HCT116 (cell line): ENCODE measurements at regions of chr1 and their contacts with region 1.

Region 1: DNA sequence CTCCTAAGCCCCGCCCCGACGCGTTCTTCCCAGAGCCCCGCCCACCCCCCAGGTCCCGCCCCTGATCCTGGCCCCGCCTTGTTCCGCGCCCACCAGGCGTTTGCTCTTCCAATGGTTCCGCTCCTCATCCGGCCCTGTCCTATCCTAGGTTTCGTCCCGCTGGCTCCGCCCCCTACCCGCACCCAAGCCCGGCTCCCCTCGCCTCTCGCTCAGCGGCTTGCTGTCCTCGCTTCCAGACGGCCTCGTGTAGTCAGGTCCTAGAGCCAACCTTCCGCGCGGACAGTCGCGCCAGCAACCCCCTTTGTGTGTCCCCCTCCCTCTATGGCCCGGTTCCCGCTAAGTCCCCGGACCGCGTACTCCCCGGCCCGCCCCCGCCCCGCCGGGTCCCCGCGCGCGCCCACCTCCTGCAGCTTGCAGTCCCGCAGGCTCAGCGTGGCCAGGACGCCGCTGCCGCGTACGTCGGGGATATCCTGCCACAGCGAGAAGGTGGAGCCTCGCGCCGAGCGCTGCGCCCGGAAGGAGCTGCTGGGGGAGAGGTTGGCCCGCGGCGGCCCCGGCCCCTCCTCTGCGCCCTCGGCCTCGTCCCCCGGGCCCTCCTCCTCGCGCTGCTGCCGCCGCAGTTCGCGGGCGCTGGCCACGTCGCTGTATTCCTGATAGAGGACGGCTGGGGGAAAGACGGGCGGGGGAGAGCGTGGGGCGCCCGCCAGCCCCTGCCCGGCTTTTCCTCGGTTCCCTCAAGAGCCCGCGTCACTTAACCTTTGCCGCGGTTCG is 5.7 kb downstream of the ARHGEF19 start:
- DNase-seq: peak; percentile 98
- ATAC-seq: peak; percentile 84
- H3K4me3 ChIP-seq: peak overlapping the region; percentile 88 to 93
- H3K27ac ChIP-seq: peak overlapping the region; percentile 91
- H3K4me1 ChIP-seq: peaks cover 25 to 53% of the 10 kb centered on the region in 2 experiments
- H3K27me3 ChIP-seq: no peaks in the 10 kb centered on the region
- CTCF ChIP-seq: no peak
- POLR2A ChIP-seq: peak; percentile 63
- RAD21 ChIP-seq: no peak

Region 2: DNA sequence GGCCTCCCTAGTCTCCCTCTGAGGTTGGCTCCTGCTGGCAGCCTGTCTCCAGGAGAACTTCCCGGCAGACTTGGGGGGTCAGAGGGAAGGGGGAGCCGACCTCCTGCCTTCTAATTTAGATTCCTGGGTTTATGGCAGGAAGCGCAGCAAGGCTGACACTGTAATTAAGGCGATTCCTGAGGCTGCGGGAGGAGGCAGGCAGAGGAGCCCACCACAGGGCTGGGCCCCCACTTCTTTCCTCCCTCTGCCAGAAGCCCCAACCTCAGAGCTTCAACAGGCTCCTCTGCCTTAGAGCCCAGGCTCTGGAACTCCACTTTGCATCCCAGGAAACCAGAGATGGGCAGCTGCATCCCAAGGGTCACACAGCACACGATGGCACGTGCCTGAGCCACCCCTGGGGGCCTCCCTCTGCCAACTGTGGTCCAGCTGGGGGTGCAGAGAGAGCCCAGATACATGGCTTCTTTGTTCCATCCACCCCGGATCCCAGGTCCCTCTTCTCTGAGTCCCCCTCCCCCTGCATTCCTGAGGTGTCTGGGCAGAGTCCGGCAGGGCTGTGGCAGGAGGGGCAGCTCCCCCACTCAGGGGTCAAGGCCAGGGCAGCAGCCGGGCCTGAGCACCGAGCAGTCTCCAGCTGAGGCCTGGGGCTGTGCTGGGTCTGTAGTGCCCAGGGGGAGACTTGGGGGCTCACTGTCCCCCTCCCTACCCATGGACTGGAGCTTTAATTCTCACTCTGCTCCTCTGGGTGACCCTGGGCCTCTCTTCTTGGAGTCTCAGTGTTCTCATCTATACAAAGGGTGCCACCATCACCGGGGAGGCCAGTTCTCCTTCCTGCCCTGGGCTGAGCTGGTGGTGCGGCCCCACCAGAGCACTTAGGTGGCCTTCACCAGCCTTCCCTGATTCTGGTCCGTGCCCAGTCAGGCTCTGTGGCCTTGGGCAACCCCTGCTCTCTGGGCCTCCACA is 93.9 kb before region 1 on chr1:
- CTCF ChIA-PET with region 1: no interaction called
- POLR2A ChIA-PET with region 1: no interaction called
- RAD21 ChIA-PET with region 1: no interaction called
- intact Hi-C with region 1: no loop called
- DNase-seq: no peak
- ATAC-seq: no peak
- H3K4me3 ChIP-seq: no peak overlapping the region
- H3K27ac ChIP-seq: no peak overlapping the region
- H3K4me1 ChIP-seq: no peaks in the 10 kb centered on the region
- H3K27me3 ChIP-seq: no peaks in the 10 kb centered on the region
- CTCF ChIP-seq: no peak
- POLR2A ChIP-seq: no peak
- RAD21 ChIP-seq: no peak

Region 3: GRCh38 chr1:16217061-16217785 is 10.5 kb after region 1 on chr1:
- CTCF ChIA-PET with region 1: interaction called, 6 read pairs
- POLR2A ChIA-PET with region 1: interaction called, 34 read pairs
- RAD21 ChIA-PET with region 1: interaction called in 1 of 2 experiments, 3 read pairs
- intact Hi-C with region 1: loop called (anchors 1 kb)
- DNase-seq: peak; percentile 96
- ATAC-seq: peak; percentile 93
- H3K4me3 ChIP-seq: peak overlapping the region; percentile 56 to 62
- H3K27ac ChIP-seq: peak overlapping the region; percentile 5; the same call in 1 of the 2 replicates
- H3K4me1 ChIP-seq: peaks cover 26 to 47% of the 10 kb centered on the region in 2 experiments
- H3K27me3 ChIP-seq: no peaks in the 10 kb centered on the region
- CTCF ChIP-seq: no peak
- POLR2A ChIP-seq: no peak
- RAD21 ChIP-seq: no peak

Region 4: GRCh38 chr1:16236511-16237342 is 30.0 kb after region 1 on chr1 and contains the start of gene CPLANE2:
- CTCF ChIA-PET with region 1: no interaction called
- POLR2A ChIA-PET with region 1: no interaction called
- RAD21 ChIA-PET with region 1: interaction called in 1 of 2 experiments, 5 read pairs
- intact Hi-C with region 1: loop called (anchors 2 kb)
- DNase-seq: peak; percentile 81
- ATAC-seq: peak; percentile 82
- H3K4me3 ChIP-seq: peak within 1 kb of the TSS; percentile 70 to 83
- H3K27ac ChIP-seq: peak within 1 kb of the TSS; percentile 70
- H3K4me1 ChIP-seq: peaks cover 16 to 30% of the 10 kb centered on the region in 2 experiments
- H3K27me3 ChIP-seq: no peaks in the 10 kb centered on the region
- CTCF ChIP-seq: no peak
- POLR2A ChIP-seq: peak; percentile 79
- RAD21 ChIP-seq: no peak
- total RNA-seq, gene CPLANE2: 8.1 TPM

Region 5: DNA sequence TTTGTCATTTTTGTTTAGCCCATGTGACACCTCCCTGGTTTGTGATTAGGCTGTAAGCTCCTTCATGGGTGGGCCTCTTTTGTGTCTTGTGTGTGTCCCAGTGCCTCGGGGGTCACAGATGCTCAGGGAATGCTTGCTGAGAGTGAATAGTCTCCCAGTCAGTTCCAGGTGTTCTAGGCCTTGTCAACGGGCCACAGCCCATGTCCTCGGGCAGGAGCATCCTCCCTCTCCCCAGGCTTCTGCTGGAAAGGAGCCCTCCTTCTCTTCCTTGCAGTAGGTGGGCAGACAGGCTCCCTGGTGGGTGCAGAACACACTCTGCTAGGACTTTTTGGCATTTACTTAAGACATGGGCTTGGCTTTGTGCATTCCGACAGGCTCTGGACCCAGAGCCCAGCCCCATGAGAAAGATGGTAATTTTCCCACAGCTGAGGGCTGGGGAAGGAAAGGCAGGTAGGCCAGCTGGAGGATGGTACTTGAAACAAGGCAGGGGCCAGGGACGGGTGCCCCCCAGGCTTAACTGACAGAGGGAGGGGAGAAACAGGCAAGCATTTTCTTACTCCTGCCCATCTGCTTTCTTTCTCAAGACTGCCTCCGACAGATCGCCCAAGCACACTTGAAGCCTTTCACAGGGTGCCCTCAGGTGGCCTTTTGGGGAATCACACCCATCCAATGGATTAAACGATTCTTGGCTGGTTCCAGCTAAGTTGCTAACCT is 37.4 kb after region 1 on chr1:
- CTCF ChIA-PET with region 1: interaction called, 6 read pairs
- POLR2A ChIA-PET with region 1: interaction called, 3 read pairs
- RAD21 ChIA-PET with region 1: no interaction called
- intact Hi-C with region 1: loop called (anchors 1 kb)
- DNase-seq: peak; percentile 65
- ATAC-seq: peak; percentile 85
- H3K4me3 ChIP-seq: no peak overlapping the region
- H3K27ac ChIP-seq: no peak overlapping the region
- H3K4me1 ChIP-seq: peaks cover 5 to 11% of the 10 kb centered on the region in 2 experiments
- H3K27me3 ChIP-seq: no peaks in the 10 kb centered on the region
- CTCF ChIP-seq: peak; percentile 85 to 92 (median 89)
- POLR2A ChIP-seq: no peak
- RAD21 ChIP-seq: peak; percentile 98

Region 6: DNA sequence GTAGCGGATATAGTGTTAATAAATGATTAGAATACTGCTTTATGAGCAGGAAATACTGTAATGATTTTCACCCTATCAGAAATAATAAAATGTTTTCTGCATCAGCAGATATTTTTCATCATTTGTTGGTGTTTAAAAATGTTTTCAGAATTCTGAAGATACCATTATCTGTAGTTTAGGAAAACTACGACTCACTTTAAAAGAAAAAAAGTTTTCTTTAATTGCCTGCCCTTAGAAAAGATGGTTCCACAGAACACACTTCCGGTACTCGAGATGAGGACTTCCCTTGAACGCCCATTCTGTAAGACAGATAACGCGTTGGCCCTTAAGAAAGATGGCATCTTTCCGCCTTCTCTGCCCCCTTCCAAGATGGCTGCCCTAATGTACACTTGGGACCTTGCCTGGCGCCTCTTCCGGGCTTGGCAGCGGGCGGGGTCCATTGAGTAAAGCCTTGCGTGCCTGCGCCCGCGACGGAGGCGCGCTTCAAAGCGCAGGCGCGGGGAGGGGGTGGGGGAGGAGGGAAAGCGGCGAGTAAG is 160.1 kb after region 1 on chr1 and contains the start of gene SZRD1:
- CTCF ChIA-PET with region 1: interaction called, 4 read pairs
- POLR2A ChIA-PET with region 1: no interaction called
- RAD21 ChIA-PET with region 1: no interaction called
- intact Hi-C with region 1: loop called (anchors 1 kb)
- DNase-seq: peak; percentile 98
- ATAC-seq: peak; percentile 88
- H3K4me3 ChIP-seq: peak within 1 kb of the TSS; percentile 61 to 96
- H3K27ac ChIP-seq: peak within 1 kb of the TSS; percentile 92
- H3K4me1 ChIP-seq: peaks cover 4 to 35% of the 10 kb centered on the region in 2 experiments; a peak in 3 of 4 replicates
- H3K27me3 ChIP-seq: no peaks in the 10 kb centered on the region
- CTCF ChIP-seq: no peak
- POLR2A ChIP-seq: no peak
- RAD21 ChIP-seq: no peak
- total RNA-seq, gene SZRD1: 141 TPM